Activated CD4-positive, alpha-beta memory T cell treated with anti-CD3 and anti-CD28 coated beads for 36 hours (primary cell): ENCODE measurements at regions of chr3 and their contacts with region 1.

Region 1: GRCh38 chr3:195542698-195543499 is at the start of gene PPP1R2:
- DNase-seq: peak; percentile 93
- H3K4me3 Mint-ChIP-seq: peak within 1 kb of the TSS; percentile 90
- H3K27ac Mint-ChIP-seq: peak within 1 kb of the TSS; percentile 91
- H3K4me1 Mint-ChIP-seq: peaks cover 59% of the 10 kb centered on the region
- H3K27me3 Mint-ChIP-seq: no peaks in the 10 kb centered on the region
- total RNA-seq, gene PPP1R2: 101 to 105 TPM

Region 2: DNA sequence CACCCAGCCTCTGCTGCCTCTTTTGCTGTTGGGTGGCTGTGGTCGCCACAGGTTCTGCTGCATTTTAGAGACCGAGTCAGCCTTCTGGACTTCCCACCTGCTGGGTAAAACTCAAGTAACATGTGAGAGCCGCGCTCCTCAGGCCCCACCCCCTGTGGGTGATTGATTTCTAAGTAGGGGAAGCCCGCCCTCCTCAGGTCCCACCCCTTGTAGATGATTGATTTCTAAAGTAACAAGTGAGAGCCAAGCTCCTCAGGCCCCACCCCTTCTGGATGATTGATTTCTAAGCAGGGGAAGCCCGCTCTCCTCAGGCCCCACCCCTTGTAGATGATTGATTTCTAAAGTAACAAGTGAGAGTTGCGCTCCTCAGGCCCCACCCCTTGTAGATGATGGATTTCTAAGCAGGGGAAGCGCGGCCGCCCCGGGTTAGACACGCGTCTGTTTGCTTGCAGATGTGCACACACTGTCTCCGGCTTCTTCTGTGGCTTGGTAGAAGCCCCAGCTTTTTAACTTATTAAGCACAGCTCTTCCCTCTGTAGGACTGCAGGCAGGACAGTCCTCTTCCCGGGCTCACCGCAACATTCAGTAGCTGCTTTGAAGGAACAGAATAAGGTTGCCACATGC is 773.8 kb before region 1 on chr3:
- CTCF ChIA-PET with region 1: no interaction called
- POLR2A ChIA-PET with region 1: no interaction called
- intact Hi-C with region 1: loop called (anchors 2 kb)
- DNase-seq: peak; percentile 96
- H3K4me3 Mint-ChIP-seq: peak overlapping the region; percentile 68
- H3K27ac Mint-ChIP-seq: peak overlapping the region; percentile 70
- H3K4me1 Mint-ChIP-seq: peaks cover 19% of the 10 kb centered on the region
- H3K27me3 Mint-ChIP-seq: peaks cover 5% of the 10 kb centered on the region

Region 3: GRCh38 chr3:195403852-195404408 is 139.0 kb before region 1 on chr3:
- CTCF ChIA-PET with region 1: no interaction called
- POLR2A ChIA-PET with region 1: interaction called, 3 read pairs
- intact Hi-C with region 1: loop called (anchors 10 kb)
- DNase-seq: no peak
- H3K4me3 Mint-ChIP-seq: no peak overlapping the region
- H3K27ac Mint-ChIP-seq: no peak overlapping the region
- H3K4me1 Mint-ChIP-seq: peaks cover 38% of the 10 kb centered on the region
- H3K27me3 Mint-ChIP-seq: no peaks in the 10 kb centered on the region

Region 4: DNA sequence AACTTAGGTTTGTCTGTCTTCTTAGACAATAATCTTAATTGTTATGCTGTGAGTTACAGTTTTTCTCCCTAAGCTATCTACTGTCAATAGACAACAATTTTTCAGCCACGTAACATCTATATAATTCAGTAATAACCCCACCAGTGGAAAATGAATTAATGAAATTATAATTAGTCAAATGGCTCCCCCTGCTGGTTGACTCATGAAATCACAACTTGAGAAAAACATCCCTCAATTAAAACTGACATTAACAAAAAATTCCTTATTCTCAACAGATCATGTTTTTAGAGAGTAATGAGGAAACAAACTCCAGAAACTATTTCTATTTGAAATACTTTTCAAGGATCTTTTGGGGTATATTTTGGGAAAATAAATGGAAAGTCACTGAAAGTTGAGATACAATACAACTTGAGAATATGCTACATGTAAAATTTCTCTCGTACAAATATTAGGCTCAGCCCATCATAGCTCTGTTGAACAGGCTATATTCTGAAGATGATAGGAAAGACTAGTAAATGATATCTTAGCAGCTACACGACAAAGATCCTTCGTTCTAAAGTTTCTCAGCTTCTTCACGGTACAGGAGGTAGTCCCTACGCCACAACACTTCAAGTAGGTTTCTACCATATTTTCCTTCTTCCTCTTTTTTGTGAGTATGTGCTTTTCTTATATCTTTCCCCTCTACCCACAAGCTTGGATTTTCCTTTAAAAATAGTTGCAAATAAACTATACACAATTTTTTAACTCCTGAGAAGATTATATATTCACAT is 20.5 kb before region 1 on chr3:
- CTCF ChIA-PET with region 1: interaction called, 28 read pairs
- POLR2A ChIA-PET with region 1: interaction called, 12 read pairs
- intact Hi-C with region 1: loop called (anchors 1 kb)
- DNase-seq: no peak
- H3K4me3 Mint-ChIP-seq: no peak overlapping the region
- H3K27ac Mint-ChIP-seq: peak overlapping the region; percentile 30
- H3K4me1 Mint-ChIP-seq: peaks cover 37% of the 10 kb centered on the region
- H3K27me3 Mint-ChIP-seq: no peaks in the 10 kb centered on the region

Region 5: GRCh38 chr3:195587824-195588223 is 44.9 kb after region 1 on chr3:
- CTCF ChIA-PET with region 1: no interaction called
- POLR2A ChIA-PET with region 1: interaction called, 3 read pairs
- intact Hi-C with region 1: loop called (anchors 5 kb)
- DNase-seq: peak; percentile 33
- H3K4me3 Mint-ChIP-seq: no peak overlapping the region
- H3K27ac Mint-ChIP-seq: no peak overlapping the region
- H3K4me1 Mint-ChIP-seq: peaks cover 5% of the 10 kb centered on the region
- H3K27me3 Mint-ChIP-seq: peaks cover 2% of the 10 kb centered on the region

Region 6: GRCh38 chr3:196179380-196180308 is 636.7 kb after region 1 on chr3:
- CTCF ChIA-PET with region 1: no interaction called
- POLR2A ChIA-PET with region 1: no interaction called
- intact Hi-C with region 1: loop called (anchors 10 kb)
- DNase-seq: peak; percentile 94
- H3K4me3 Mint-ChIP-seq: peak overlapping the region; percentile 66
- H3K27ac Mint-ChIP-seq: peak overlapping the region; percentile 97
- H3K4me1 Mint-ChIP-seq: peaks cover 59% of the 10 kb centered on the region
- H3K27me3 Mint-ChIP-seq: no peaks in the 10 kb centered on the region